ENCODE measurements at regions of chr7 and their contacts with region 1.

Region 1: GRCh38 chr7:85464042-85464651 is 277.3 kb upstream of the SEMA3D start:
- DNase-seq: no peak
- ATAC-seq: no peak
- H3K4me3 Mint-ChIP-seq: no peak overlapping the region
- H3K27ac Mint-ChIP-seq: no peak overlapping the region
- H3K4me1 Mint-ChIP-seq: no peaks in the 10 kb centered on the region
- H3K27me3 Mint-ChIP-seq: no peaks in the 10 kb centered on the region
- CTCF ChIP-seq: no peak

Region 2: GRCh38 chr7:85186521-85187241 is 277.5 kb before region 1 on chr7 and contains the start of gene SEMA3D:
- CTCF ChIA-PET with region 1: interaction called, 20 read pairs
- POLR2A ChIA-PET with region 1: no interaction called
- DNase-seq: peak; percentile 87
- ATAC-seq: peak; percentile 90
- H3K4me3 Mint-ChIP-seq: peak within 1 kb of the TSS; percentile 87
- H3K27ac Mint-ChIP-seq: no peak within 1 kb of the TSS
- H3K4me1 Mint-ChIP-seq: peaks cover 19% of the 10 kb centered on the region
- H3K27me3 Mint-ChIP-seq: peaks cover 46% of the 10 kb centered on the region
- CTCF ChIP-seq: peak; percentile 83
- total RNA-seq, gene SEMA3D: 2.2 to 3.8 TPM (median 2.9 TPM) in 3 replicates

Region 3: GRCh38 chr7:85423209-85423895 is 40.8 kb before region 1 on chr7:
- CTCF ChIA-PET with region 1: no interaction called
- POLR2A ChIA-PET with region 1: no interaction called
- DNase-seq: no peak
- ATAC-seq: no peak
- H3K4me3 Mint-ChIP-seq: no peak overlapping the region
- H3K27ac Mint-ChIP-seq: no peak overlapping the region
- H3K4me1 Mint-ChIP-seq: no peaks in the 10 kb centered on the region
- H3K27me3 Mint-ChIP-seq: no peaks in the 10 kb centered on the region
- CTCF ChIP-seq: no peak

Measured in WTC11 (cell line).